Right ventricle myocardium inferior (tissue), 1 donor: ENCODE measurements at regions of chrX and their contacts with region 1.

Region 1: DNA sequence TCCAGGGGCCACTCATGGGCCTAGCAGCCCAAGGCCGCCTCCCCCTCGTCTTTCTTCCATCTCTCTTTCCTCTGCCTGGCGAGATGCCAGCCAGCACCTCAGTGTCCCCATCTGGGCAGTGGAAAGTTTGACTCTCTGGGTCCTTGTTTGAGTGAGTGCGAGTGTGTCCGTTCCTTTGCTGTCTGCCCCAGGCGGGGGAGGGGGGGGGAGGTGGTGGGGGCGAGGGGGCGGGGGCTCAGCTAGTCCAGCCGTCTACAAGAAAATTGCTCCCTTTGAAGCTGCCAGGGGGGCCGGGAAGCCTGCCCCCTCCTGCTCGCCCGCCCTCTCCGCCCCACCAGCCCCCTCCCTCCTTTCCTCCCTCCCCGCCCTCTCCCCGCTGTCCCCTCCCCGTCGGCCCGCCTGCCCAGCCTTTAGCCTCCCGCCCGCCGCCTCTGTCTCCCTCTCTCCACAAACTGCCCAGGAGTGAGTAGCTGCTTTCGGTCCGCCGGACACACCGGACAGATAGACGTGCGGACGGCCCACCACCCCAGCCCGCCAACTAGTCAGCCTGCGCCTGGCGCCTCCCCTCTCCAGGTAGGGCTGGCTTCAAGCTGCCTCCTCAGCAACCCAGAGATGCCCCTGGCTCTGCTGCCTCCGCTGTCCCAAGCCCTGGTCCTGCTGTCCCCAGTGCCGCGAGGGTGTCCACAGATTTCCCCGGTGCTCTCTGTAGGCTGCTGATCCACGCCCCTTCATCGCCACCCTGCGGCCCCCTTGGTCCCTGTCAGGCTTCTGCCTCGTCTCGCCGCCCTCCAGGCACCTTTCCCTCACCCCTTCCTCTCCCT is at the start of gene BGN:
- DNase-seq: no peak
- ATAC-seq: peak; percentile 63
- total RNA-seq, gene BGN: 42.2 TPM

Region 2: GRCh38 chrX:153438531-153438930 is 56.2 kb before region 1 on chrX:
- intact Hi-C with region 1: no loop called
- DNase-seq: no peak
- ATAC-seq: peak; percentile 34

Region 3: GRCh38 chrX:153463031-153463430 is 31.7 kb before region 1 on chrX:
- intact Hi-C with region 1: loop called (anchors 2 kb)
- DNase-seq: no peak
- ATAC-seq: no peak